ENCODE measurements at regions of chr2 and their contacts with region 1.

Region 1: DNA sequence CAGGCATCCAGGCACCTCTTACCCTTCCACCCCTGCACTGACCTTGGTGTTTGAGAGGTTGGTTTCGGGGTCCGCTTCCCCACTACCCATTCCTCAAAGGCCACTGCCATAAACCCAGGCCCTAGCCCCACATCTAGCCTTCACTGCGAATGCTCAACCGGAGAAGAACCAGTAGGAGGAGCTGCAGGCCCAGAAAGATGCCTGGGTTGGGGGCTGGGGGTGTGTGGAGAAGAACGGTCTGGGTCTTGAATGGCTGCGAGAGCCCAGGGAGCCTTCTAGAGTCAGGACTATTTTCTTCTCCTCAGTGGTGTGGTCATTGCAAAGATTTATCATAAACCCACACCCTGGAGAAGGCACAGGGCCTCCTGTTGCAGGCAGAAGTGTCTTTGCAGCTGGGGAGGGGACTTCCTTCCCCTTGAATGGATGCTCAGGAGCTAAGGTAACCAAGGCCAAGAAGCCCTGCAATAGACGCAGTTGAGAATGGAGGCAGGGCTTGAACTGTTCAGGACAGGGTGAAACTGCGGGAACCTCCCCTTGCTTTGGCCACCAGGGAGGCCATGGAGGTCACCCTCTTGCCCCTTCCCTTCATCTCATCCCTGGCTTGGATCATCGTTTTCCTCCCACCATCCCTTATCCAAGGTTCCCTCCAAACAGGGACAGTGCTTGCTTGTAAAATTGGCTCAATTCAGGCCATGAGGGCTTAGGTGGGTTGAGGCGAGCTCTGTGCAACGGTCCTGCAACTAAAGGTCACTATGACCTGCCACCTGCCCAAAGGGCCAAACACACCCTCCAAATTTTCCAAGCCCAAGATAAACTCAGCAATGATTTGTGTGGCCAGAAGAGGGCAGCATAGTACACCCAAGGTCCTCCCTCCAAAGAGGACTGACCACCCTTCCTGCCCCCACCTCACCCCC is 20.9 kb downstream of the THNSL2 start:
- DNase-seq: no peak
- H3K4me3 ChIP-seq: no peak overlapping the region
- H3K27ac ChIP-seq: no peak overlapping the region
- H3K27me3 ChIP-seq: no peaks in the 10 kb centered on the region
- CTCF ChIP-seq: peak; percentile 61

Region 2: GRCh38 chr2:88170472-88170892 is 20.6 kb before region 1 on chr2:
- CTCF ChIA-PET with region 1: interaction called, 18 read pairs
- POLR2A ChIA-PET with region 1: no interaction called
- DNase-seq: no peak
- H3K4me3 ChIP-seq: peak overlapping the region; percentile 60
- H3K27ac ChIP-seq: no peak overlapping the region
- H3K27me3 ChIP-seq: peaks cover 5% of the 10 kb centered on the region
- CTCF ChIP-seq: peak; percentile 7; the same call in 1 of the 2 replicates

Region 3: GRCh38 chr2:88201811-88202169 is 10.7 kb after region 1 on chr2:
- CTCF ChIA-PET with region 1: interaction called, 19 read pairs
- POLR2A ChIA-PET with region 1: no interaction called
- DNase-seq: no peak
- H3K4me3 ChIP-seq: no peak overlapping the region
- H3K27ac ChIP-seq: no peak overlapping the region
- H3K27me3 ChIP-seq: peaks cover 13% of the 10 kb centered on the region
- CTCF ChIP-seq: no peak

Region 4: GRCh38 chr2:88212251-88212790 is 21.3 kb after region 1 on chr2:
- CTCF ChIA-PET with region 1: interaction called, 19 read pairs
- POLR2A ChIA-PET with region 1: no interaction called
- DNase-seq: no peak
- H3K4me3 ChIP-seq: no peak overlapping the region
- H3K27ac ChIP-seq: no peak overlapping the region
- H3K27me3 ChIP-seq: peaks cover 4% of the 10 kb centered on the region
- CTCF ChIP-seq: peak; percentile 66

Region 5: DNA sequence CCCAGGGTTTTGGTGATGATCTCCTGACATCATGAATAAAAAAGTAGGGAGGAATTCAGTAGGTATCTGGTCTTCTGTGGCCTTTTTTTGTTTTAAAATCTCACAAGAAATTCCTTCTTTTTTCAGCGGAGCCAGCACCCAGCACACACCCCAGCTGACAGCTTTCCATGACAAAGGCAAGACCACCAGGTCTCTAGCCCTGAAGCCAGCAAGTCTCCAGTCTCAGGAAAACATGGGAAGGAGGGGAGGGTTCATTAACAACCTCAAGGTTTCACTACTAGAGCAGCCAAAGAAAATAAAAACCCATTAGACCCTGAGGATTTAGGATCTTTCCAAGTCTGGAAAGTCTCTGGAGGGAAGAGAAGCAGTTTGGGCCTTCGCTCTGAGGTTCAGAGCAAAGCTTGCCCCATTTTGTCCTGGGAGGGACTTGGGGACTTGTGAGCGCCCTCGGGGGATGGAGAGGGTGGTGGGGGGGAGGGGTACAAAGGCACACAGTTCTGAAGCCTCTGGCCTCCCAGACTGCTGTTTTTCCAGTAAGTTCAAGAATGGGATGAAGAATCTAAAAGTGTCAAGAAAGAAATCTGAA is 252.4 kb after region 1 on chr2:
- CTCF ChIA-PET with region 1: no interaction called
- POLR2A ChIA-PET with region 1: no interaction called
- DNase-seq: no peak
- H3K4me3 ChIP-seq: no peak overlapping the region
- H3K27ac ChIP-seq: no peak overlapping the region
- H3K27me3 ChIP-seq: peaks cover 9% of the 10 kb centered on the region
- CTCF ChIP-seq: no peak

Measured in AG04450 (cell line).